H1 (cell line): ENCODE measurements at regions of chr9 and their contacts with region 1.

Region 1: DNA sequence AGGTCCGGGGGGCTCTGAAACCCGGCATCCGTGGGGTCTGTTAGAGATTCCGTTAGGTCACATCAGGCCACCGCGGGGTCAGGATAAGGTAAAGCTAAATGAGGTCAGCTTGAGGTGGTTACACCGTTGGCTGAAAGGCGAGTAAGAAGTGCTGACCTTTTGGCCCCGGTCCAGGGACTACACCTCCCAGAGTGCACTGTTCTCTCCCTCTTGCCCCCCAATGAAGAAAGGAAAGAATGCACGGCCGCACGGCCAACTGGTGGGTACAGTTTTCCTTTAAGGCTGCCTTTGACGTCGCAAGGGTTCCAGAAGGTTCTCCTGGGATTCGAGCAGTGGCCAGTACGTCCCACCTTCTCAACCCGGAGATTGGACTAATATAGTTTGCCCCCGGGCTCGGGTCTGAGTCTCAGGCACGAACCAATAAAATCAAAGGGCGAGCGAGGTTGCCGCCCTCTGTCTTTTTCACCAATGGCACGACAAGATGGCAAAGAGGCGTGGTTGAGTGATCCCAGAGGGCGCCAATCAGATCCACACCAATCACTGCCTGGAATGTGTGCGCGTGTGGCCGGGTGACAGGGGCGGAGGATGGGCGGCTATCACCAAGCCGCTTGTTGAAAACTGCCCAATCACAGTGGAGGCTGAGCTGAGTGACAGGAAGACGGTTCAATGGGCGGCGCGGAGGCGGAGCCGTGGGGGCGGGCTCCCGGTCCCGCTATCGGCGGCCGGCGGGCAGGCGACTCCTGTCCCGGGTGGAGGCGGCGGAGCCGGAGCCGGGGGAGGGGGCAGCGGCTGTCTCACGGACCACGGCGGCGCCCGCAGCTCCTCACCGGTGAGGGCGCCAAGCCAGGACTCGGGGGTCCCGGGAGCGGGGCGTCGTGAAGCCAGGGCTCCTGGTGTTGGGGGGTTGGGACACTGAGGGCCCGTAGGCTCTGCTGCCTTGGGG is at the start of gene DNAJB5:
- DNase-seq: peak; percentile 98 to 100
- H3K4me3 ChIP-seq: peak within 1 kb of the TSS; percentile 65 to 94 (median 74)
- H3K27ac ChIP-seq: peak within 1 kb of the TSS; percentile 90
- H3K4me1 ChIP-seq: peaks cover 17 to 46% (median 34%) of the 10 kb centered on the region in 4 experiments
- H3K27me3 ChIP-seq: no peaks in the 10 kb centered on the region
- CTCF ChIP-seq: no peak
- EP300 ChIP-seq: no peak
- POLR2A ChIP-seq: peak; percentile 47 to 64
- RAD21 ChIP-seq: no peak
- total RNA-seq, gene DNAJB5: 34.1 and 38.0 TPM in 2 replicates

Region 2: DNA sequence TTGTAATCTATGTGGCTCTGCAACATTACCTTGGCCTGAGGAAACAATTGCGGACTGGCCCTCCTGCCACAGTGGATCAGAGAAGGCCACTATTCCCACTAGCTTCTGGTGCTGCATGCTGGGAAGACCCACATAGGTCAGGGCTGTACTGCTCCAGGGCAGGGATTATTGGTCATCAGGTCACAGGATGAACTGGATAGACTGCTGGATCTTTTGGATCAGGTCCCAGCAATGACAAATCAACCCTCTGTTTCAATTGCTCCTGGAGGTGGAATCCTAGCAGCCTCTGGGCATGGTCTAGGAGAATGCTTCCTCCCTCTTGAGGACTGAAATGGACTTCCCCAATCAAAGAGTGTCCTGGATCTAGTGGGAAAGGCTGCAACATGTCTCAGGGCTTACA is 97.9 kb before region 1 on chr9:
- CTCF ChIA-PET with region 1: interaction called, 148 read pairs
- POLR2A ChIA-PET with region 1: interaction called, 3 read pairs
- DNase-seq: no peak
- H3K4me3 ChIP-seq: no peak overlapping the region
- H3K27ac ChIP-seq: no peak overlapping the region
- H3K4me1 ChIP-seq: no peaks in the 10 kb centered on the region
- H3K27me3 ChIP-seq: no peaks in the 10 kb centered on the region; a peak in 1 of 7 replicates
- CTCF ChIP-seq: no peak
- EP300 ChIP-seq: no peak
- POLR2A ChIP-seq: no peak
- RAD21 ChIP-seq: no peak

Region 3: GRCh38 chr9:34957492-34958410 is 31.5 kb before region 1 on chr9 and contains the start of gene PHF24:
- CTCF ChIA-PET with region 1: interaction called, 43 read pairs
- POLR2A ChIA-PET with region 1: interaction called, 5 read pairs
- DNase-seq: peak in 1 of 2 experiments; percentile 64
- H3K4me3 ChIP-seq: peak within 1 kb of the TSS; percentile 41 to 67 (median 48)
- H3K27ac ChIP-seq: no peak within 1 kb of the TSS
- H3K4me1 ChIP-seq: peaks cover 0 to 3% (median 1%) of the 10 kb centered on the region in 4 experiments; a peak in 6 of 7 replicates
- H3K27me3 ChIP-seq: peaks cover 1 to 22% (median 9%) of the 10 kb centered on the region in 4 experiments; a peak in 6 of 7 replicates
- CTCF ChIP-seq: peak in 2 of 3 experiments; percentile 6 to 10; a peak in 2 of 4 replicates
- EP300 ChIP-seq: no peak
- POLR2A ChIP-seq: no peak
- RAD21 ChIP-seq: peak in 1 of 2 experiments; percentile 22; a peak in 1 of 4 replicates
- total RNA-seq, gene PHF24: 0.35 and 1.0 TPM in 2 replicates

Region 4: DNA sequence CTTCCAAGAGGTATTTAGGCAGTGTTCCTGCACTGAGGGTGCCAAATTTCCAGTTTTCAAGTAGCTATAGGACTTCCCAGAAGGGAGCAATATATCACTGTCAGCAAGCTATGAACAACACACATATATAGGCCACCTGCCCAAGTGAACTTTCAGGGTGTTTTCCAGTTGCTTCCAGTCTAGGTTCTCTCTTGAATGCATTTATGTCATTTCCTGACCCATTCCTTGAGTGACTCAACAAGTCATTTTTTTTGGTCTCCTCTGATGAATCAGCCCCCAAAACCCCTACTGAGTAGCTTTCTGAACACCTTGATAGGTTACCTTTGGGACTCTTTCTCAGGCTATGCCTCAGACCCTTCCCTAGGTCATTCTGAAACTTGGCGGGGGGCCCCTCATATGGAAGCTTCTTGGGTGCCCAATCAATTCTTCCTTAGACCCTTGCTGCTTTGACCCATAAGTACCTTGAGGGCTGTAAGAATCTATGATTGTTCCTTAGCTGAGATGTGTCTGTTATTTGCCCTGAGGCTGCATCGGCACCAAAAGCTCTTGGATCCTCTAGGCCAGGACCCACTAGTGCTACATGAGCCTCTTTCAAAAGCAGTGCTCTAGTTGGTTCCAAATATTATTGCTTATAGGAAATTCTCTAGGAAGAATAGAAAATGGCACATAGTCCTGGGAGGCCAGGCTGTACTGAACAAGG is 12.7 kb after region 1 on chr9:
- CTCF ChIA-PET with region 1: interaction called, 12 read pairs
- POLR2A ChIA-PET with region 1: interaction called, 11 read pairs
- DNase-seq: no peak
- H3K4me3 ChIP-seq: no peak overlapping the region
- H3K27ac ChIP-seq: no peak overlapping the region
- H3K4me1 ChIP-seq: peaks cover 2 to 9% (median 4%) of the 10 kb centered on the region in 4 experiments; a peak in 2 of 7 replicates
- H3K27me3 ChIP-seq: no peaks in the 10 kb centered on the region
- CTCF ChIP-seq: no peak
- EP300 ChIP-seq: no peak
- POLR2A ChIP-seq: no peak
- RAD21 ChIP-seq: no peak

Region 5: GRCh38 chr9:35071814-35072460 is 82.7 kb after region 1 on chr9:
- CTCF ChIA-PET with region 1: interaction called, 5 read pairs
- POLR2A ChIA-PET with region 1: interaction called, 29 read pairs
- DNase-seq: peak; percentile 59 to 89
- H3K4me3 ChIP-seq: peak overlapping the region; percentile 75 to 94 (median 87)
- H3K27ac ChIP-seq: peak overlapping the region; percentile 93
- H3K4me1 ChIP-seq: peaks cover 4 to 12% (median 7%) of the 10 kb centered on the region in 4 experiments
- H3K27me3 ChIP-seq: no peaks in the 10 kb centered on the region
- CTCF ChIP-seq: peak; percentile 26 to 48 (median 45); a peak in 3 of 4 replicates
- EP300 ChIP-seq: no peak
- POLR2A ChIP-seq: peak in 1 of 2 experiments; percentile 90; a peak in 1 of 3 replicates
- RAD21 ChIP-seq: peak in 1 of 2 experiments; percentile 8; a peak in 1 of 4 replicates

Region 6: DNA sequence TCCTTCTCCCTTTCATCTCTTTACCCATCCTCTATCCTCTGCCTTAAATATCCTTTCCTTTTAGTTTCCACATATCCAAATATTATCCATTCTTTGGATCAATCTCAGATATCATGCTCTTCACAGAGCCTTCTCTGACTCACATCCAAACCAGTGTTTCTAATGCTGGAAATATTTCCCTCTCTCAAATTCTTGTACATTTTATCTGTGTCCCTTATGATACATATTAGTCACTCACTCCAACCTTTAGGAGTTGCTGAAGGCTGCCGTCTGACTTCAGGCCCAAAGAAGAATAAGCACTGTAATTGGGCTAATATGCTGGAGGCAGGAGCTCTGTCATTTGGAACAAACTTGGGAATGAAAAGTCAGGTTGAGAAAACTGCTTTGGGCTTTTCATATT is 344.3 kb after region 1 on chr9:
- CTCF ChIA-PET with region 1: no interaction called
- POLR2A ChIA-PET with region 1: no interaction called
- DNase-seq: no peak
- H3K4me3 ChIP-seq: no peak overlapping the region
- H3K27ac ChIP-seq: no peak overlapping the region
- H3K4me1 ChIP-seq: no peaks in the 10 kb centered on the region
- H3K27me3 ChIP-seq: no peaks in the 10 kb centered on the region
- CTCF ChIP-seq: no peak
- EP300 ChIP-seq: no peak
- POLR2A ChIP-seq: no peak
- RAD21 ChIP-seq: no peak